ENCODE measurements at regions of chr16 and their contacts with region 1.

Region 1: DNA sequence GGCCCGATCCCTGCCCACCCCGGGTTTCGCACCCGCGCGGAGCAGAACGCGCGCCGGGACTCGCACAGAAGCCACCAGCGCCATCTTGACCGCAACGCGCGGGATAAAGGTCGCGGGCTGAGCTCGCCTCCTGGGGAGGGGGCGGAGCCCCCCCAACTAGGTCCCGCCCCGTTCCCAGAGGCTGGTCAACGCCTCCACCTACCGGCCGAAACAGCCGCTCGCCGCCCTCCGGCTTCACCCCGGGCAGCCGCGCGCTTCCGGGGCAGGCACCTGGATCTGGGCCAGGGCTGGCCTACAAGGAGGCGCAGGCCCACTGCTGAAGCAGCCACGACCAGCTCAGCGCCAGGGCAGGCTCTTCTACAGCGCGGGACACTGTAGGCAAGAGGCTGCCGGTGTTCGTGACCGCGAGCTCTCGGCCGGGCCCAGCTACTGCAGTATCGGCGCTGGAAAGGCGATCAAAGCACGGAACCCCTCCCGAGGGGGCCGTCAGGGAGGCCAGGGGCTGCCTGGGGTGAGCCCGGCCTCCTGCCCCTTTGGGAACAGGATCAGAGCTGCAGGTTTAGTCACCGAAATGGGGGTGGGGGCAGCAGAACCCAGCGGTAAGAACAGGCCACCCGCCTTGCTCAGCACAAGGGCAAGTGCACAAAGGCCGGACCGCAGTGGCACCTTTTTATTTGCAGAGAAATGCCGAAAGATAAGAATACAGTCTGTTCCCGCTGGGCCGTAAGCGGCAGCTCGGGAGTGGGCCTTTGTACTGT is at the start of gene ECI1:
- DNase-seq: peak; percentile 98
- H3K4me3 ChIP-seq: peak within 1 kb of the TSS; percentile 63 to 75 (median 70)
- H3K27ac ChIP-seq: peak within 1 kb of the TSS; percentile 90 to 94 (median 92)
- H3K4me1 ChIP-seq: peaks cover 0 to 27% (median 23%) of the 10 kb centered on the region in 4 donors
- H3K27me3 ChIP-seq: no peaks in the 10 kb centered on the region
- CTCF ChIP-seq: peak; percentile 66 to 76 (median 70)
- EP300 ChIP-seq: no peak
- POLR2A ChIP-seq: peak; percentile 55 to 71
- total RNA-seq, gene ECI1: 50.2 to 87.2 (median 67.0) TPM

Region 2: GRCh38 chr16:2023098-2023925 is 228.3 kb before region 1 on chr16:
- intact Hi-C with region 1: loop called (anchors 5 kb)
- DNase-seq: peak; percentile 96
- H3K4me3 ChIP-seq: peak overlapping the region; percentile 8 to 44 (median 36)
- H3K27ac ChIP-seq: peak overlapping the region; percentile 64 to 78 (median 71)
- H3K4me1 ChIP-seq: peaks cover 4 to 57% (median 51%) of the 10 kb centered on the region in 4 donors
- H3K27me3 ChIP-seq: peaks cover 25 to 36% (median 33%) of the 10 kb centered on the region in 3 donors
- CTCF ChIP-seq: peak; percentile 95 to 98 (median 96)
- EP300 ChIP-seq: no peak
- POLR2A ChIP-seq: no peak

Region 3: DNA sequence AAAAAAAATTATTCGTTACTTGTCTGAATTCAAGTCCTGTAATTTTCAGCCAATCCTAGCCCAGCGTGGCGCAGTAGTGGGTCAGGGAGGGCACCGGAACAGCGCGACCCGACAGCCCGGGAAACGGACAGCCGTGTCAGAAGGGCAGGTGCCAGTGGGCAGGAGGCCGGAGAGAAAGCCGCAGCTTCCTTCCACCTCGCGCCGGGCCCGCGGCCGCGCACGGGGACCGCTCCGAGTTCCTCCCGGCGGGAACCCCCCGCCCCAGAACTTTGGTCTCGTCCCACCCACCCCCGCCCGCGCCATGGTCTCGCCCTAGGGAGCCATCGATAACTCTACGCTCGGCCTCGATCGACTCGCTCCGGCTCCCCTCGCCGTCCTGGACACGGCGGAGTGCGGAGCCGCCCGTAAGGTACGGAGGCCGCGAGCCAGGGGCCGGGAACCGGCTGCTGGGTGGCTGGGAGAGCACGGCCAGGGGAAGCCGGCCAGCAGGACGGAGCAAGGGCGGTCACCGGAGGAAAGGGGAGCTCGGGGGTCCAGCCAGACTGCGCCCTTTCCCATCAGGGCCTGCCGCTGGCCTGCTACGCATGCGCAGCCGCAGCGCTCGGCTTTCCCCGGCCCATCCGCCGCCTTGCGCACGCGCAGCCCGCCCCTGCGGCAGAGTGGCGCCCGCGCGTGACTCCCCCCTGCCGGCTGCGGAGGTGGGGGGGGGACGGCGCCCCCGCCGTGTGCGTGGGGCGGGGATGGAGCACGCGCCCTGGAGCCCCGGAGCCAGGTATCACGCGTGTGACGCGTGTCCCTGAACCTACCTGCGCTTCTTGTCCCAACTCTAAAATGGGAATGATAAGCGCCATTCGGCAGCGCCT is 46.3 kb before region 1 on chr16 and contains the start of gene MLST8:
- intact Hi-C with region 1: loop called (anchors 5 kb)
- DNase-seq: peak; percentile 94
- H3K4me3 ChIP-seq: peak within 1 kb of the TSS; percentile 83 to 89 (median 88)
- H3K27ac ChIP-seq: peak within 1 kb of the TSS; percentile 97 to 100 (median 98)
- H3K4me1 ChIP-seq: peaks cover 0 to 20% (median 18%) of the 10 kb centered on the region in 4 donors
- H3K27me3 ChIP-seq: no peaks in the 10 kb centered on the region
- CTCF ChIP-seq: no peak
- EP300 ChIP-seq: peak in 1 of 4 donors; percentile 8
- POLR2A ChIP-seq: peak; percentile 54 to 71
- total RNA-seq, gene MLST8: 30.6 to 48.5 (median 37.1) TPM

Region 4: GRCh38 chr16:2223375-2224182 is 28.1 kb before region 1 on chr16 and contains the start of gene E4F1:
- intact Hi-C with region 1: loop called (anchors 1 kb)
- DNase-seq: peak; percentile 100
- H3K4me3 ChIP-seq: peak within 1 kb of the TSS; percentile 80 to 98 (median 98)
- H3K27ac ChIP-seq: peak within 1 kb of the TSS; percentile 85 to 95 (median 92)
- H3K4me1 ChIP-seq: peaks cover 0 to 33% (median 26%) of the 10 kb centered on the region in 4 donors
- H3K27me3 ChIP-seq: no peaks in the 10 kb centered on the region
- CTCF ChIP-seq: no peak
- EP300 ChIP-seq: peak in 1 of 4 donors; percentile 37
- POLR2A ChIP-seq: peak; percentile 88 to 92
- total RNA-seq, gene E4F1: 17.4 to 26.9 (median 22.0) TPM

Region 5: DNA sequence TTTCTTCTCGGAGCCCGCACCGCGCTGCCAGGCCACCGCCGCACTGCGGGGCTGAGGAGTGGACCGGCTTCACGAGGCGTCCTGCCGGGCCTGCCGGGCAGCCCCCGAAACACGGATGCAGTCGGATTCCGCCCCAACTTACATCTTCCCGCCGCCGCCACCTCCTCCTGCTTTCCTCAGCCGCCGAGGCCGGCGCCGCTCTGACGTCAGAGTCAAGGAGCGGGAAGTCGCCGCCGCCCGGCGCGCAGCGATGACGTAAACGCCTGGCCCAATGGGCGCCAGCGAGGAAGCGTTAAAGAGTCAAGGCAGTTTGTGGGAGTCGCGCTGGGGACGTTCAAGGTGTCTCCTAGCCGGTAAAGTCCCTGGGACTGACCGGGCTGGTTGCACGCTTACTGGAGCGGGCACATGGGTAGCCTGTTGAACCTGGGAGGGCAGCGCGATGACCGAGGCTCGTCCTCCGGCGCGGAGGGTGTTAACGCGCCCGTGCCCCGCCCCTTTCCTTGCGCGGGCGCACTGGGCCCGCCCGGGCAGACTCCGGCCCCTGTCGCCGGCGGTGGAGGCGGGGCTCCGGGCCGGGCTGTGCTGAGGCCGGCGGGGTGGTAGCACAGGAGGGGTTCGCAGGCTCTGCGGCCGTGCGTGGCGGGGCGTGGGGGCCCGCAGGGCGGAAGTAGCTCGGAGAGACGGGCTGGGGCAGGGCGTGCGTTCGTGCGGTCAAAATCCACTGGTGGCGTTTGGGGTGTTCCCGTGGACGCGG is 16.4 kb after region 1 on chr16 and contains the start of gene RNPS1:
- intact Hi-C with region 1: loop called (anchors 1 kb)
- DNase-seq: peak; percentile 98
- H3K4me3 ChIP-seq: peak within 1 kb of the TSS; percentile 70 to 90 (median 78)
- H3K27ac ChIP-seq: peak within 1 kb of the TSS; percentile 87 to 98 (median 96)
- H3K4me1 ChIP-seq: peaks cover 0 to 52% (median 35%) of the 10 kb centered on the region in 4 donors
- H3K27me3 ChIP-seq: no peaks in the 10 kb centered on the region
- CTCF ChIP-seq: no peak
- EP300 ChIP-seq: peak in 2 of 4 donors; percentile 33 to 43
- POLR2A ChIP-seq: peak; percentile 98 to 99
- total RNA-seq, gene RNPS1: 110 to 145 (median 128) TPM

Region 6: DNA sequence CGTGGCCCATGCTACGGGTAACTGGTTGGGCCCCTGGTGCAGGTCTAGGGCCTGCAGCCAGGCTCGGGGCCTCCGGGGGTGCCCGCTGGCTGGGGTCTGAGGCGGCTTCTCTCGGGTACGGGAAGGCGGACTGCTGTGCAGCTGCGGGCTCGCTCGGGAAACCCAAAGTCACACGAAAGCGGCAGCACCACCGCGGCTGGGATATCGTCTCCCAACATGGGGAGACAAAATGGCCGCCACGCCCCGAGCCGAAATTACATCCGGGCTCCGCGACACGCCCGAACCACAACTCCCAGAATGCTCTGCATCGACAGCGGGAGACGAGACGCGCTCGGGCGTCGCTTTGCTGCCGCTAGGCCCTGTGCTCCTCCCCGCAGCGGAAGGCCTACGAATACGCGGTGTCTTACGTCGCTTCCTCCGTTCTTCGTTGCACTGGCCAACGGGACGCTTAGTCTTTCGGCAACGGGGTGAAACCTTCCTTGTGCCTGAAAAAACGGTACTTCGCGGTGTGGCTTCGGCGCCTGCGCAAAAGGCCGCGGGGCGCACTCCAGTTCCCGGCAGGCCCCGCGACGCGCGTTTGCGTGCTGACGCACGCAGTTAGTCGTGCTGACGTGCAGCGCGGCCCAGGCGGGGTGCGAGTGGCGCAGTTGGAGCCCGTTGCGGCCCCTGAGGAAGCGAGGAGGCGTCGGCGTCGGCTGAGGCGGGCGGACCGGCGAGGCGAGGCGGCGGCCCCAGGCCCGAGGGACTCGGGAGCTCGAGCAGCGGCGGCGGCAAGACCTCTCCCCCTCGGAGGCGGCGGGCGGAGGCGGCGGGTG is 500.6 kb after region 1 on chr16 and contains the start of gene SRRM2:
- intact Hi-C with region 1: no loop called
- DNase-seq: peak; percentile 98
- H3K4me3 ChIP-seq: peak within 1 kb of the TSS; percentile 77 to 94 (median 84)
- H3K27ac ChIP-seq: peak within 1 kb of the TSS; percentile 98 to 99 (median 99)
- H3K4me1 ChIP-seq: peaks cover 0 to 45% (median 38%) of the 10 kb centered on the region in 4 donors
- H3K27me3 ChIP-seq: no peaks in the 10 kb centered on the region
- CTCF ChIP-seq: peak in 1 of 4 experiments; percentile 25
- EP300 ChIP-seq: peak in 2 of 4 donors; percentile 22 to 38
- POLR2A ChIP-seq: peak; percentile 61 to 88
- total RNA-seq, gene SRRM2: 181 to 826 (median 219) TPM